MCF 10A (cell line): ENCODE measurements at regions of chr18 and their contacts with region 1.

Region 1: GRCh38 chr18:50307738-50308470 is 20.4 kb upstream of the CXXC1 start:
- DNase-seq: peak; percentile 100
- H3K4me3 Mint-ChIP-seq: peak overlapping the region; percentile 88
- H3K27ac Mint-ChIP-seq: peak overlapping the region; percentile 94
- H3K4me1 Mint-ChIP-seq: peaks cover 13% of the 10 kb centered on the region
- H3K27me3 Mint-ChIP-seq: no peaks in the 10 kb centered on the region
- CTCF ChIP-seq: no peak

Region 2: GRCh38 chr18:50281295-50281971 is 26.5 kb before region 1 on chr18 and contains the start of gene MBD1:
- CTCF ChIA-PET with region 1: no interaction called
- POLR2A ChIA-PET with region 1: interaction called, 30 read pairs
- intact Hi-C with region 1: no loop called
- DNase-seq: peak; percentile 97
- H3K4me3 Mint-ChIP-seq: peak within 1 kb of the TSS; percentile 96
- H3K27ac Mint-ChIP-seq: peak within 1 kb of the TSS; percentile 97
- H3K4me1 Mint-ChIP-seq: peaks cover 54% of the 10 kb centered on the region
- H3K27me3 Mint-ChIP-seq: no peaks in the 10 kb centered on the region
- CTCF ChIP-seq: no peak
- total RNA-seq, gene MBD1: 203 and 227 TPM in 2 replicates

Region 3: GRCh38 chr18:50287441-50288347 is 20.2 kb before region 1 on chr18 and contains the start of gene CXXC1:
- CTCF ChIA-PET with region 1: interaction called, 5 read pairs
- POLR2A ChIA-PET with region 1: interaction called, 36 read pairs
- intact Hi-C with region 1: loop called (anchors 1 kb)
- DNase-seq: peak; percentile 99
- H3K4me3 Mint-ChIP-seq: peak within 1 kb of the TSS; percentile 86
- H3K27ac Mint-ChIP-seq: peak within 1 kb of the TSS; percentile 90
- H3K4me1 Mint-ChIP-seq: peaks cover 33% of the 10 kb centered on the region
- H3K27me3 Mint-ChIP-seq: no peaks in the 10 kb centered on the region
- CTCF ChIP-seq: peak; percentile 30
- total RNA-seq, gene CXXC1: 65.1 and 85.4 TPM in 2 replicates